ENCODE measurements at regions of chr21 and their contacts with region 1.

Region 1: DNA sequence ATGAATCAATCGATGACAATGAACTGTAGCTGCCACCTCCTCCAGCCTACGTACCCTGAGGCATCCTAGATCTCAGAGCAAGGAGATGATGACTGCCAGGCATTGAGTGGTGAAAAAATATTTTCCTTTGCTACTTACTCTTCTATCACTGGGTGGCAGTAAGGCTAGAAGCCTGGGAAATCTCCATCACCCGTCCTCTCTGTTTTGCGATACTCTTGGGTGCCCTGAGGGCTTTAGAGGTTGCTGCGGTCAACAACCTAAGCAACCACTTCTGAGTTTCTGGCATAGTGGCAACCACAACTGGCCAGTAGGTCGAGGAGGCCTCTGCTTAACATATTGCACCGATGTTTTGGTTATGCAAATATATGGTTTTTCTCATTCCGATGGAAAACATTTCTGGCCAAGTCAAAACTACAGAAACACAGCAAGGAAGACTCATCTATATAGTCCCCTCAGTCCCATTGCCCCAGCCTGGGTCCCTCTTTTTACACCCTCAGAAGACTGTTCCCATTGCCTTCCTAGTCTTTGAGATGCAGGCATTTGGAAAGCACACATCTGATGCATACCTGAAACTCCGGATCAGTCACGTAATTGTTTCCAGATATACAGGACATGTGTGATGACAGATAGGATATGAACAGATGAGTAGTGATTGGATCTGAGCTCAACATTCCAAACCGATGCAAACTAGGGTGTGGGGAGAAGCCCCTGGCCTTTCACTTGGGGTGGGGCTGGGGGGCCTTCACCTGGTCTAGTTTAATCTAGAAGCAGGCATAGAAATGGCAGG is 136.8 kb downstream of the RUNX1 start:
- DNase-seq: no peak
- ATAC-seq: no peak
- H3K4me3 ChIP-seq: no peak overlapping the region
- H3K4me3 Mint-ChIP-seq: no peak overlapping the region
- H3K27ac ChIP-seq: no peak overlapping the region
- H3K27ac Mint-ChIP-seq: peak overlapping the region in 1 of 2 donors; percentile 55
- H3K4me1 ChIP-seq: peaks cover 9 to 46% of the 10 kb centered on the region in 2 experiments
- H3K4me1 Mint-ChIP-seq: peaks cover 94 to 96% (median 95%) of the 10 kb centered on the region in 3 donors
- H3K27me3 ChIP-seq: no peaks in the 10 kb centered on the region
- H3K27me3 Mint-ChIP-seq: no peaks in the 10 kb centered on the region

Region 2: GRCh38 chr21:34974162-34974981 is 62.0 kb after region 1 on chr21:
- CTCF ChIA-PET with region 1: interaction called in 1 of 2 experiments, 4 read pairs
- POLR2A ChIA-PET with region 1: interaction called, 5 to 14 read pairs
- DNase-seq: peak in 33 of 35 experiments; percentile 10 to 82 (median 32)
- ATAC-seq: peak; percentile 85 to 90 (median 88)
- H3K4me3 ChIP-seq: peak overlapping the region; percentile 24 to 61
- H3K4me3 Mint-ChIP-seq: peak overlapping the region; percentile 74 to 81 (median 78)
- H3K27ac ChIP-seq: peak overlapping the region; percentile 58
- H3K27ac Mint-ChIP-seq: peak overlapping the region; percentile 89 to 90
- H3K4me1 ChIP-seq: peaks cover 44 to 61% of the 10 kb centered on the region in 2 experiments
- H3K4me1 Mint-ChIP-seq: peaks cover 82 to 88% (median 86%) of the 10 kb centered on the region in 3 donors
- H3K27me3 ChIP-seq: no peaks in the 10 kb centered on the region
- H3K27me3 Mint-ChIP-seq: no peaks in the 10 kb centered on the region

Region 3: GRCh38 chr21:35170244-35170643 is 257.9 kb after region 1 on chr21:
- CTCF ChIA-PET with region 1: no interaction called
- POLR2A ChIA-PET with region 1: interaction called in 1 of 2 experiments, 11 read pairs
- DNase-seq: no peak
- ATAC-seq: no peak
- H3K4me3 ChIP-seq: no peak overlapping the region
- H3K4me3 Mint-ChIP-seq: no peak overlapping the region
- H3K27ac ChIP-seq: no peak overlapping the region
- H3K27ac Mint-ChIP-seq: no peak overlapping the region
- H3K4me1 ChIP-seq: peaks cover 6 to 16% of the 10 kb centered on the region in 2 experiments
- H3K4me1 Mint-ChIP-seq: peaks cover 34 to 38% (median 35%) of the 10 kb centered on the region in 3 donors
- H3K27me3 ChIP-seq: no peaks in the 10 kb centered on the region
- H3K27me3 Mint-ChIP-seq: peaks cover 0 to 2% of the 10 kb centered on the region in 2 donors